Activated naive CD4-positive, alpha-beta T cell treated with anti-CD3 and anti-CD28 coated beads, Interleukin-2, amount 10 ng/mL, durations not matched to agents 7 days and 5 days (primary cell): ENCODE measurements at regions of chr12 and their contacts with region 1.

Region 1: DNA sequence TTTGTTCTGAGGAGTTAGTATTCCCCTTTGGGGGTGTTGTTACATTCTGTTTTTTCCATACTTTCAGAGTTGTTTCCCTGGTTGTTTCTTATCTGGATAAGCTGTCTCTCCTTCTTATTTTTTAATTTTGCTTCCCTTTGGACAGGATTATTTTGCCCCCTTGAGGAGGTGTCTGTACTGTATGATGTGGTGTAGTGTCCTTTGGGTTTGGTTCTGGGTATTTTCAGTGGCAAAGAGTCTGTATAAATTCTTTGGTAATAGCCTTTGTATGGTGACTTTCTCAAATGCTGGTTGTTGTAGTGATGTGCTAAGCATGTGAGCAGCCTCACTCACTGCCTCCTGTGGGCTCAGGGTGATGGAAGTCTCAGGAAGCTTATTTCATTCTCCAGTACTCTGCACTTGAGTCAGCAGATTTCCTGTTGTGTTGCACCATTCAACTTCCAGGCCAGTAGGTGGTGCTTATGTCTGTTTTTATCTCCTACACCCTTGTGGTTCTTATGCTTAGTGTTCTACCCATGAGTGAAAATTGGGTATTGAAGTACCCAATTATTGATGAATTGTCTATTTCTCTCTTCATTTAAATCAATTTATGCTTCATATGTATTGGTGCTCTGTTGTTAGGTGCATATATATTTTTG is 103.3 kb upstream of the PMCH start:
- DNase-seq: peak; percentile 36
- H3K4me3 Mint-ChIP-seq: no peak overlapping the region
- H3K27ac Mint-ChIP-seq: no peak overlapping the region
- H3K4me1 Mint-ChIP-seq: no peaks in the 10 kb centered on the region
- H3K27me3 Mint-ChIP-seq: no peaks in the 10 kb centered on the region

Region 2: DNA sequence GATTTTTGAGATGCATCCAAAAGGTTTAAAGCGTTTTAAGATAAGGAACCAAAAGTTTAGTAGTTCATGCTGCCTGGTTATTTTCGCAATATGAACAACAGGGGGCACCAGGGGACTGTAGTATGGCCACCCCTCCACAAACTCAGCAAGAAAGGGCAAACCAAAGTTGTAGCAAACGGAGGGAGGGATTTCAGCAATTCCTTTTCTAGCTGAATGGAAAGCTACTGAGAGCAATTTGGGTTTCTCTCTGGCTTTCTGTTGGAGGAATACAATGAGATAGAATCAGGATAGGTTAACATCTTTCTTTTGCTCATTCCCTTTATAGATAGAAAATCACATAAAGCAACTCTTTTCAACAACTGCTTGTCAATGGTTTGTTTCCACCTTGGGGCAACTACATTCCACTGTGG is 361.1 kb before region 1 on chr12:
- CTCF ChIA-PET with region 1: interaction called, 12 read pairs
- DNase-seq: peak; percentile 70
- H3K4me3 Mint-ChIP-seq: no peak overlapping the region
- H3K27ac Mint-ChIP-seq: no peak overlapping the region
- H3K4me1 Mint-ChIP-seq: no peaks in the 10 kb centered on the region
- H3K27me3 Mint-ChIP-seq: peaks cover 32% of the 10 kb centered on the region

Region 3: DNA sequence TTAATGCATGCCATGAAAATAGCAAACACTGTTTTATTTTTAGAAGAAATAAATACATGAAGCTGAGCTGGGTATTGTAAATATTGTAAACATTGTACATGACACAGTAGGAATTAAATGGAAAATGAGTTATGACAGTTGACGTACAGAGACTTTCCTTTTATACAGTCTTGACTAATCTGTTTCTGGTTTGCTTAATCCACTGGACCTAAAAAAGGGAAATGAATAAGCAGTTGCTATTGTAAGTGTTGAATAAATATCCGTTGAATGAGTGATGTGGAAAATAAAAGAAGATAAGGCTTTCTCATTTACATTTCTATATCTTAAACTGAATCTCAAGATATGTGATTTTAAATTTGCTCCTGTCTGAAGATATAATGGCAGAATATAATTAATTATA is 118.3 kb before region 1 on chr12:
- CTCF ChIA-PET with region 1: no interaction called
- DNase-seq: no peak
- H3K4me3 Mint-ChIP-seq: no peak overlapping the region
- H3K27ac Mint-ChIP-seq: no peak overlapping the region
- H3K4me1 Mint-ChIP-seq: no peaks in the 10 kb centered on the region
- H3K27me3 Mint-ChIP-seq: no peaks in the 10 kb centered on the region

Region 4: DNA sequence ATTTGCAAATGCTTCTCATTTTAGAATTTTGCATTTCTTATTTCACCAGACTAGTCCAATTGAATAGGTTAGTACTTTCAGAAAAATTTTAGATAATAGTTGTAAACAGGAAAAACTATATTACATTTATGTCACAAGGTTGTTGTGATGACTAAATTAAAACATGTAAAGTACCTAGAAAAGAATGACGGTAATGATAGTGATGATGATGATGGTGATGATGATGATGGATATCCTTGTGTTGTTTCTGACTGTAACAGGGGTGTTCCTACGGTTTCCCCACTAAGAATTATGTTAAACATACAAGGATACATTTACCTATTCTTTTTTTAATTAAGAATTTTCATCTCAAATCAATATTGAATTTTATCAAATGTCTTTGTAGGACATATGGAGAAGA is 54.9 kb before region 1 on chr12:
- CTCF ChIA-PET with region 1: no interaction called
- DNase-seq: no peak
- H3K4me3 Mint-ChIP-seq: no peak overlapping the region
- H3K27ac Mint-ChIP-seq: no peak overlapping the region
- H3K4me1 Mint-ChIP-seq: no peaks in the 10 kb centered on the region
- H3K27me3 Mint-ChIP-seq: no peaks in the 10 kb centered on the region

Region 5: DNA sequence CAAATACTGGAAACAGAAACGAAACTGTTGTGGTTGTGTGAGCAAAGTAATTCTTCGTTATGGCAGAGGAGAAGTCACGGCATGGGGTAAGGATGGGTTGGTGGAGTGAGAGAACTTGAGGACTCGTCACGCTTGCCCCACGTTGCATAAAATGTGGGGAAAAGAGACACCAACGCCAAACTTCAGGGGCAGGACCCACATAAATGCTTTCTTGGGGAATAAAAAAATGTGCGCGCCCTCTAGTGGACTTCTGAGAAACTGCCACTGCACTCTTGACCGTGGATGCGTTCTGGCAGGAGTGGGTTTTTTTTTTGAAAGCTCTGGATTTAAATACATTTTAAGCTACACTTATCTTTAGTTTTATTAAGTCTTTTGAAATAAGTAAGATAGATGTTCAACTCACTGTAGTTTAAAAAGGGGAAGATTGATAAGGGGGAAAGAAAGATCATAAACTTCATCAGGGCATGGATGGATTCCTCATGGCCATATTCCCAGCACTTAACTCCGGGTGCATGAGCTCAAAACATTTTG is 183.6 kb after region 1 on chr12:
- CTCF ChIA-PET with region 1: interaction called, 13 read pairs
- DNase-seq: peak; percentile 68
- H3K4me3 Mint-ChIP-seq: no peak overlapping the region
- H3K27ac Mint-ChIP-seq: peak overlapping the region; percentile 73
- H3K4me1 Mint-ChIP-seq: peaks cover 23% of the 10 kb centered on the region
- H3K27me3 Mint-ChIP-seq: no peaks in the 10 kb centered on the region

Region 6: GRCh38 chr12:102618197-102618877 is 317.4 kb after region 1 on chr12:
- CTCF ChIA-PET with region 1: no interaction called
- DNase-seq: no peak
- H3K4me3 Mint-ChIP-seq: no peak overlapping the region
- H3K27ac Mint-ChIP-seq: no peak overlapping the region
- H3K4me1 Mint-ChIP-seq: no peaks in the 10 kb centered on the region
- H3K27me3 Mint-ChIP-seq: no peaks in the 10 kb centered on the region